ENCODE measurements at regions of chr10 and their contacts with region 1.

Region 1: GRCh38 chr10:75210282-75211006 is at the start of gene VDAC2:
- DNase-seq: peak; percentile 92
- H3K4me3 Mint-ChIP-seq: peak within 1 kb of the TSS; percentile 100
- H3K27ac Mint-ChIP-seq: peak within 1 kb of the TSS; percentile 99
- H3K4me1 Mint-ChIP-seq: peaks cover 42% of the 10 kb centered on the region
- H3K27me3 Mint-ChIP-seq: no peaks in the 10 kb centered on the region
- total RNA-seq, gene VDAC2: 193 TPM

Region 2: GRCh38 chr10:75137533-75138438 is 72.7 kb before region 1 on chr10:
- CTCF ChIA-PET with region 1: no interaction called
- intact Hi-C with region 1: loop called (anchors 2 kb)
- DNase-seq: peak; percentile 62
- H3K4me3 Mint-ChIP-seq: no peak overlapping the region
- H3K27ac Mint-ChIP-seq: peak overlapping the region; percentile 69
- H3K4me1 Mint-ChIP-seq: peaks cover 34% of the 10 kb centered on the region
- H3K27me3 Mint-ChIP-seq: no peaks in the 10 kb centered on the region

Region 3: GRCh38 chr10:75187961-75188426 is 22.4 kb before region 1 on chr10:
- CTCF ChIA-PET with region 1: interaction called, 11 read pairs
- intact Hi-C with region 1: loop called (anchors 1 kb)
- DNase-seq: peak; percentile 82
- H3K4me3 Mint-ChIP-seq: no peak overlapping the region
- H3K27ac Mint-ChIP-seq: no peak overlapping the region
- H3K4me1 Mint-ChIP-seq: peaks cover 8% of the 10 kb centered on the region
- H3K27me3 Mint-ChIP-seq: no peaks in the 10 kb centered on the region

Region 4: DNA sequence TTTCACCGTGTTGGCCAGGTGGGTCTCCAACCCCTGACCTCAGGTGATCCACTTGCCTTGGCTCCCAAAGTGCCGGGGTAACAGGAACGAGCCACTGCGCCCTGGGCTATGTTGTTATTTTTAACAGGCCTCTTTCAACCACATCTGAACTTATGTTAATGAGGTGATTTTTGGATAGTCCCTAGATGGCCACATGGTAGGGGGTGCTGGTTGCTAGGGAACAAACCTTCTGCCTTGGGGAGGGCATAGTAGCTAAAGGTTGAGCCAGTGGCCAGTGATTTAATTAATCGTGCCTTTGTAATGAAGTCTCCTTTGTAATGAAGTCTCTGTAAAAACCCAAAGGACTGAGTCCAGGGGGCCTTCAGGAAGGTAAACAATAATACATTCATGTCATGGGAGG is 16.2 kb after region 1 on chr10:
- CTCF ChIA-PET with region 1: interaction called, 30 read pairs
- intact Hi-C with region 1: loop called (anchors 1 kb)
- DNase-seq: no peak
- H3K4me3 Mint-ChIP-seq: no peak overlapping the region
- H3K27ac Mint-ChIP-seq: peak overlapping the region; percentile 65
- H3K4me1 Mint-ChIP-seq: peaks cover 61% of the 10 kb centered on the region
- H3K27me3 Mint-ChIP-seq: no peaks in the 10 kb centered on the region

Region 5: GRCh38 chr10:76265441-76266080 is 1055.1 kb after region 1 on chr10:
- CTCF ChIA-PET with region 1: no interaction called
- intact Hi-C with region 1: no loop called
- DNase-seq: no peak
- H3K4me3 Mint-ChIP-seq: no peak overlapping the region
- H3K27ac Mint-ChIP-seq: no peak overlapping the region
- H3K4me1 Mint-ChIP-seq: no peaks in the 10 kb centered on the region
- H3K27me3 Mint-ChIP-seq: no peaks in the 10 kb centered on the region

Measured in activated naive CD4-positive, alpha-beta T cell treated with anti-CD3 and anti-CD28 coated beads for 36 hours (primary cell).